ENCODE measurements at regions of chr1 and their contacts with region 1.

Region 1: DNA sequence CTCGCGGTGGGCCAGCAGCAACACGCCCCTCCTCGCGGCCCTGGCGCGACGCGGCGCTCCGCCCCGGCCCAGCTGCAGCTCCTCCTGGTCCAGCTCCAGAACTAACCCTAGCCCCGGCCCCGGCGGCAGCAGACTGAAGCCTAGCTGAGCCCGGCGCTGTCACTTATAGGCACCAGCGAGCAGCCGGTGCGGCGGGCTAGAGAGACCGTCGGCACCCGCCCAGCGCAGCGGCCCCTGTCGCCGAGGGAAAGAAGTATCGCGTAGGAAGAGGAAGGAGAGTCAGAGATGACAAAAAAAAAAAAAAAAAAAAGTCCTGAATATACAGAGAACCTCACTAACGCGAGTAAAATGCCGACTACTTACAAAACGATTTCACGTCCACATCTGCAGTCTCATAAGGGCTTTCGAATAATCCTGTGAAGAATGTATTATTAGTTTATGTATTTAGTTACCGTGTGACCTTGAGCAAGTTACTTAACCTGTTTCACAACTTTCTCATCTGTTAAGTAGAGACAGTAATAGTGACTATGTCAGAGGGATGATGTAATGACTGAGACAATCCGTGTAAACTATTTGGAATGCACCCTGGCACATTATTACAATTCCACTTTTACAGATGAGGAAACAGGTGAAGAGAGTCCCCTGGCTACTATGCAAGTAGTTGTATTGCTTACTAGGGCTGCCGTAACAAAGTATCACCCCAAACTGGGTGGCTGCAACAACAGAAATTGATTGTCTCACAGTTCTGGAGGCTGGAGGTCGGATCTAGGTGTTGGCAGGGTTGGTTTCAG is at the start of gene SLC9A1:
- DNase-seq: peak; percentile 93 to 95 (median 94)
- ATAC-seq: peak; percentile 89
- H3K4me3 ChIP-seq: peak within 1 kb of the TSS; percentile 77
- H3K27ac ChIP-seq: peak within 1 kb of the TSS; percentile 70
- H3K4me1 ChIP-seq: peaks cover 40 to 41% of the 10 kb centered on the region in 2 experiments
- H3K27me3 ChIP-seq: no peaks in the 10 kb centered on the region
- CTCF ChIP-seq: peak; percentile 90 to 99 (median 97)
- EP300 ChIP-seq: peak; percentile 41
- POLR2A ChIP-seq: peak; percentile 98
- RAD21 ChIP-seq: peak; percentile 14 to 39; a peak in 2 of 4 replicates
- polyA plus RNA-seq, gene SLC9A1: 0.59 to 1.0 TPM

Region 2: GRCh38 chr1:27097484-27097917 is 57.7 kb before region 1 on chr1:
- CTCF ChIA-PET with region 1: no interaction called
- POLR2A ChIA-PET with region 1: interaction called, 16 read pairs
- in situ Hi-C with region 1: no loop called
- intact Hi-C with region 1: loop called (anchors 10 kb)
- DNase-seq: peak; percentile 86 to 90 (median 88)
- ATAC-seq: peak; percentile 84
- H3K4me3 ChIP-seq: no peak overlapping the region
- H3K27ac ChIP-seq: no peak overlapping the region
- H3K4me1 ChIP-seq: peaks cover 18 to 41% of the 10 kb centered on the region in 2 experiments
- H3K27me3 ChIP-seq: no peaks in the 10 kb centered on the region; a peak in 1 of 5 replicates
- CTCF ChIP-seq: peak; percentile 98 to 99 (median 99)
- EP300 ChIP-seq: no peak; the same call in 1 of the 2 replicates
- POLR2A ChIP-seq: no peak
- RAD21 ChIP-seq: peak; percentile 100

Region 3: DNA sequence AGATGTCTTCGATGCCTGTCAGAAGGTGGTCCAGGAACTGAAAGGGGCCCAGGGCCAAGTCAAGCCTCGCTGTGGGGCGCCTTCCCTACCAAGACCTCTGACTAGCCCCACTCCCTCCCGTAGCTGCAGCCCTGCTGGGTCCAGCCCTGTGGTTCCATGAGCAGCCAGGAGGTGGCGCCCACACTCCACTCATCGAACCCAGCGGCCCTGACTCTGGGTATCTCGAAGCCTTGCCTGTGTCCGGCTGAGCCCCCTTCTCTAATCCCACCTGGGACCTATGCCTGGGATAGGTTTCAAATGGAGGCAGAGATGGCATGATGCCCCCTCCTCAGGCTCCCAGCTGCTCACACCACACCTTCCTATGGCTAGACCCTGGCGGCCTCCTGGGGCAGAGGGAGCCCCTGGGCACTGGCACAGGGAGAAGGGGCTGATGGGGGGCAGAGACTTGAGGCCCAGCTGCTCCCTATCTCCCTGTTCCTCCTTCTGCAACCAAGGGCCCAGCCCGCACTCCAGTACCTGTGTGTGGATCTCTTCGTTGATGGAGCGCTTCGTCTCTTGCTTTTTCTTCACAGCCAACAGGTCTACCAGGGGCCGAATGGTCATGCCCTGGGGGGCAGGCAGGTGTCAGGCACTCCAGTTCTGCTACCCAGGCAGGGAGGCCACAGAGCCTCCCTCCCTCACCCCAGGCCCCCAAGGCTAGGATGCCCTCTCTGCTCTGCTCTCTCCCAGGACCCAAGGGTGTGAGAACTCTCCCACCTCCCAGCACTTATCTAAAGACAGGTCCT is 52.3 kb before region 1 on chr1:
- CTCF ChIA-PET with region 1: no interaction called
- POLR2A ChIA-PET with region 1: interaction called, 16 read pairs
- in situ Hi-C with region 1: no loop called
- intact Hi-C with region 1: loop called (anchors 10 kb)
- DNase-seq: peak; percentile 85 to 90 (median 88)
- ATAC-seq: peak; percentile 89
- H3K4me3 ChIP-seq: no peak overlapping the region
- H3K27ac ChIP-seq: no peak overlapping the region
- H3K4me1 ChIP-seq: peaks cover 18 to 57% of the 10 kb centered on the region in 2 experiments
- H3K27me3 ChIP-seq: no peaks in the 10 kb centered on the region; a peak in 1 of 5 replicates
- CTCF ChIP-seq: peak; percentile 97 to 99 (median 97)
- EP300 ChIP-seq: no peak
- POLR2A ChIP-seq: no peak
- RAD21 ChIP-seq: peak; percentile 95 to 98

Region 4: DNA sequence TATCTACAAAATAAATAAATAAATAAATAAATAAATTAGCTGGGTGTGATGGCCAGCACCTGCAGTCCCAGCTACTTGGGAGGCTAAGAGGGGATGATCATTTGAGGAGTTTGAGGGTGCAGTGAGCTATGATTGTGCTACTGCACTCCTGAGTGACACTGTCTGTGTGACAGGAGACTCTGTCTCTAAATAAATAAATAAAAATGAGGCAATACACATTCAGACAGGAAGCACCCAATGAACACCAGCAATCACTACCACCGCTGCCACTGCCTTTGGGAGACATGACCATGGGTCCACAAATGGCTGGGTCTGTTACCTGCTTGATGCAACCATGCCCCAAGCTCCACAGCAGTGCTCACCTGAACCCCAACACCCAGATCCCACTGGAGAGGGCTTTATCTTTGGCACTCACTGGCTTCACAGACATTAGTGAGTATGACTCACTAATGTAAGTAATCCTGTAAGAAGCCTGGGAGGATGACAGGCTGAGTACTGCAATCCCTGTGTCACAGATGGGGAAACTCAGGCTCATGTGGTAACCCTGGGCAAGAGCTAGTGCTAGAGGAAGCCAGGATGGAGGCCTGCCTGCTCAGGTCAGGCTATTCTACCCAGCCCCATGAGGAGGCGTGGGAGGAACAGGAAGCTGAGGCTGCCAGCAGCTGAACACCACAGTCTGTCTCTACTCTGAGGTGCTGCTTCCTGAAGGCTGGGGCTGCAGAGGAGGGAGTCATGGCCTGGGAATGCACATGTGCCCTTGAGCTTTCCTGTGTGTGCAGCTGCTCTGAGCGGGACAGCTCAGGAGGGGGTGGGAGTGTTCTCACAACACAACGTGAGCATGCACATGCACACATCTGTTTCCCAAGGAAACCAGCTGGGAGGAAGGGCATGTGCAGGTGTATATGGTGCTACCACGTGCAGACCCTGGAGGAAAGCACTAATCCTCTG is 43.3 kb before region 1 on chr1:
- CTCF ChIA-PET with region 1: no interaction called
- POLR2A ChIA-PET with region 1: interaction called, 107 read pairs
- in situ Hi-C with region 1: no loop called
- intact Hi-C with region 1: loop called (anchors 10 kb)
- DNase-seq: peak; percentile 52 to 78 (median 60)
- ATAC-seq: peak; percentile 75
- H3K4me3 ChIP-seq: no peak overlapping the region
- H3K27ac ChIP-seq: peak overlapping the region; percentile 8; the same call in 1 of the 3 replicates
- H3K4me1 ChIP-seq: peaks cover 34 to 53% of the 10 kb centered on the region in 2 experiments
- H3K27me3 ChIP-seq: no peaks in the 10 kb centered on the region
- CTCF ChIP-seq: peak; percentile 39 to 71 (median 40); a peak in 3 of 6 replicates
- EP300 ChIP-seq: peak; percentile 49; the same call in 1 of the 2 replicates
- POLR2A ChIP-seq: no peak
- RAD21 ChIP-seq: peak; percentile 77 to 83

Region 5: DNA sequence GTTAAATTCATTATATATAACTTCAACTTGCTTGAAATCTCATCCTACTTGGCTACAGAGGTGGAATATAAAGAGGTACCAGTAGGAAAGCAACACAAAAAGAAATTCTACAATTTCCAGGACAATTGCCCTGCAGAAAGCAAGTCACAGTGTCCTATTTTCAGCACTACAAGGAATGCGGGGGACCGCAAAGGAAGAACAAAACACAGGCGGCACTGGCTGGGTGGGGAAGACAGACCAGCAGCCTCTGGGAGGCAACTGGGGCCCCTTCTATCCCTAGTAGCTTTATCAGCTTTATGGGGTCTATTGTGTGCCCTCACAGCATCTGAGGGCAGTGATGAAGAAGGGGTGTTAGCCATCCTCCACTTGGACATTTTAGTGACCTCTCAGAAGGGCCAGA is 30.8 kb before region 1 on chr1:
- CTCF ChIA-PET with region 1: no interaction called
- POLR2A ChIA-PET with region 1: interaction called, 14 read pairs
- in situ Hi-C with region 1: no loop called
- intact Hi-C with region 1: no loop called
- DNase-seq: no peak
- ATAC-seq: no peak
- H3K4me3 ChIP-seq: no peak overlapping the region
- H3K27ac ChIP-seq: no peak overlapping the region
- H3K4me1 ChIP-seq: peaks cover 8 to 14% of the 10 kb centered on the region in 2 experiments; a peak in 4 of 5 replicates
- H3K27me3 ChIP-seq: no peaks in the 10 kb centered on the region
- CTCF ChIP-seq: no peak
- EP300 ChIP-seq: no peak
- POLR2A ChIP-seq: no peak
- RAD21 ChIP-seq: no peak

Region 6: GRCh38 chr1:27136998-27137542 is 18.1 kb before region 1 on chr1:
- CTCF ChIA-PET with region 1: no interaction called
- POLR2A ChIA-PET with region 1: interaction called, 380 read pairs
- in situ Hi-C with region 1: no loop called
- intact Hi-C with region 1: no loop called
- DNase-seq: peak; percentile 62 to 83 (median 70)
- ATAC-seq: peak; percentile 83
- H3K4me3 ChIP-seq: no peak overlapping the region
- H3K27ac ChIP-seq: peak overlapping the region; percentile 87
- H3K4me1 ChIP-seq: peaks cover 33 to 34% of the 10 kb centered on the region in 2 experiments
- H3K27me3 ChIP-seq: no peaks in the 10 kb centered on the region
- CTCF ChIP-seq: no peak
- EP300 ChIP-seq: peak; percentile 36; the same call in 1 of the 2 replicates
- POLR2A ChIP-seq: peak; percentile 45
- RAD21 ChIP-seq: no peak

Region 7: DNA sequence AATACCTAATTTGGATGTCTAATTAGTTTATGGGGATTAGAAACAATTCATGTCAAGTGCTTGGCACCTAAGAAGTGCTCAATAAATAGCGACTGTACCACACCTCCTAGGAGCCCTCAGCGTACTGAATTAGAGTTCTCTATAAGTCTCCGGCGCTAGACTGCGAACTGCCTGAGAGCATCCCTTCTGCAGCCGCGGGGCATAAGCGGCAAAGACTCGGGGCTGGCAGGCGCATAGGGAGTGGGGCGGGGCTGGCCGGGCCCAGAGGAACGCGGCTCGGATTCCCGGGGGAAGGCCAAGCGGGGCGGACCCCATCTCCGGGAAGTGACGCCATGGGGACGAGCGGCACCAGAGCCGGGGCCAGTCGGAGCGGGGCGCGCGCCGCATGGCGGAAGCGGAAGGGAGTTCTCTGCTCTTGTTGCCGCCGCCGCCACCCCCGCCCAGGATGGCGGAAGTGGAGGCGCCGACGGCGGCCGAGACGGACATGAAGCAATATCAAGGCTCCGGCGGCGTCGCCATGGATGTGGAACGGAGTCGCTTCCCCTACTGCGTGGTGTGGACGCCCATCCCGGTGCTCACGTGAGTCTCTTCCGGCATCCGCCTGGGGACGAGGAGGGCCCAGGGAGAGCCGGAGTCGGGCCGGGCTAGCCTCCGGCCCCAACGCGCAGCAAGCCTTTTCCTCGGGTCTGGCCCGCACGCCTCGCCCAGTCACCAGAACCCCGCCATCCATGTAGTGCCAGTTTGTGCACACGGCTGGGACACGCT is 166.8 kb after region 1 on chr1 and contains the start of gene TMEM222:
- CTCF ChIA-PET with region 1: no interaction called
- POLR2A ChIA-PET with region 1: interaction called, 10 read pairs
- in situ Hi-C with region 1: no loop called
- intact Hi-C with region 1: no loop called
- DNase-seq: peak; percentile 98 to 99 (median 98)
- ATAC-seq: peak; percentile 98
- H3K4me3 ChIP-seq: peak within 1 kb of the TSS; percentile 79
- H3K27ac ChIP-seq: peak within 1 kb of the TSS; percentile 93
- H3K4me1 ChIP-seq: peaks cover 12 to 13% of the 10 kb centered on the region in 2 experiments
- H3K27me3 ChIP-seq: no peaks in the 10 kb centered on the region
- CTCF ChIP-seq: peak in 1 of 3 experiments; percentile 35; a peak in 2 of 6 replicates
- EP300 ChIP-seq: no peak; the same call in 1 of the 2 replicates
- POLR2A ChIP-seq: peak; percentile 92
- RAD21 ChIP-seq: peak in 1 of 2 experiments; percentile 19; a peak in 1 of 4 replicates
- polyA plus RNA-seq, gene TMEM222: 6.9 to 14.4 TPM